GM13977 (cell line): ENCODE measurements at regions of chr4 and their contacts with region 1.

Region 1: DNA sequence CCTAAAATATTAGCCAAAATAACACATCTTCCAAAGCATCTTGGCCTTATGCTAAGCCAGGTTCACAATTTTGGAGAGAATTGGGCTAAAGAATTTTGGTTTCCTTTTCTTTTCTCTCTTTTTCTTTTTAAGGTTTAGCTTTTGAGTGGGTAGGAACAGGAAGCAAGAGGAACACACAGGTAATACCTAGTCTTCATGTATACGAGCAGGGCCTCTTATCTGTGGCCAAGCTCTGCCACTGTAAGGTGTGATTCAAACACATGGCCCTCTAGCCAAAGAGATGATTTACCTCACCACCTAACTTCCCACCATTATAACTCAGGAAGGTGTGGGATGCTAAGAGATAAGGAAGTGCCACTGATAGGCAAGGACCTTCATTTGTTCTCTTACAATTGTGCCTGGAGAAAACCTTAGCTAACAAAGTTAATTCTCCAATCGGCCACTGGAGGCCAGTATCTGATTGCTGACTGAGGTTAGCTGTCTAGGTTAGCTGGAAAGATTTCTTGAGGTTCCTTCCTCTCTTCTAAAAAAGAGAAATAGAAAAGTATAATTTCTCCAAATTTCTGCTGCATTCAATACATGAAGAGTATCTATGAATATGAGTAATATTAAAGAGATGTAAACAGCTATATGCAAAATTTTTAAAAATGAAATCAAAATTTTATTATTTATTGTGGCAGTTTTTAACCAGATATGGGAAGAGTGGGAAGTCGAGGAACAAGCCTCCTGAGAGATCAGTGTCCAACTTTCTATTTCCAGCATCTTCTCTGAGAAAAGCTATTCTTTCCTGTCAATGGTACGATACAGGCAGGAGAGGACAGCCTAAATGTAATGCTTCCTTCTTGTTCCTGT is 30.1 kb upstream of the BBS7 start:
- DNase-seq: peak; percentile 24
- CTCF ChIP-seq: peak; percentile 69

Region 2: DNA sequence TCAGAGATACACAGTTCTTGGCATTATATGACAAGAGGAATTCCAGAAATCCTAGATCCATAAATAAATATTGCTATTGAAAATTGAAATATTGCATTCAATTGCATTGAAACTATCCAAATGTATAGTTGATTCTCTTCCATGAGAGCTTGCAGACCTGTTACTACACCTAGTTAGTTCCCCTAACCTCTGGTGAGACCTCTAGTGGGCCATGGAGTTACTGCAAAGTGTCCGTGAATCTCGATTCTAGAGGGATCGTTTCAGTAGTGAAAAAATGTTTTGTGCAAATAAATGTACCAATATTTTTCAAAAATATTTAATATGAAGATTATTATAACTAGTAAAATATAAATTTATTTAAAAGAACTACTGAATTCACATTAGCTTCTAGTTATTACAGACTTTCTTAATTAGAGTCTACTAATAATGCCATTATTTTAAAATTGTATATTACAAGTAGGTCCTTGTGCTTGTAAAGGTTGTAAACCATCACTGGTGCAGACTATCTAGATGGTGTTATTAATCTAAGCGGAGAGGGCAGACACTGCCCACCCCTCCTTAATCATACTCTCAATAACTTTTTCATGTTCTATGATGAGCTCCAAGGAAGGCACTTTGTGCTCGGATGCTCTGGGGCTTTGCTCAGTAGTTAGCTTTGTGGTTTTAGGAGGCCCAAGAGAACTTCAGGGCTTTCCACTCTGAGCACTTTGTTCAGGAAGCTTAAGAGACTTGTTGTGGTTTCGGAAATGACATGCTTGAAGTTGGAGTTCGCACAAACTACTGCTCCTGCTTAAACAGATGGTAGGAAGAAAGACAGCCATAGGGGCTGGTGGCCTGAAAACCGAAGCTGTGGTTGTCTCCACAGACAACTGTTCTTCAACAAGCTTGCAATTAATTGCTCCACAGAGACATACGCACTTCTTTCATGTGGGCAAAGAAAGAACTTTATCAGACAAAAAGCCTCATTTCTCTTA is 677.7 kb after region 1 on chr4:
- in situ Hi-C with region 1: loop called (anchors 25 kb)
- DNase-seq: peak; percentile 62
- CTCF ChIP-seq: peak; percentile 72

Region 3: GRCh38 chr4:122700178-122700725 is 799.9 kb after region 1 on chr4:
- in situ Hi-C with region 1: no loop called
- DNase-seq: no peak
- CTCF ChIP-seq: no peak